CD4-positive, alpha-beta T cell (primary cell): ENCODE measurements at regions of chr6 and their contacts with region 1.

Region 1: DNA sequence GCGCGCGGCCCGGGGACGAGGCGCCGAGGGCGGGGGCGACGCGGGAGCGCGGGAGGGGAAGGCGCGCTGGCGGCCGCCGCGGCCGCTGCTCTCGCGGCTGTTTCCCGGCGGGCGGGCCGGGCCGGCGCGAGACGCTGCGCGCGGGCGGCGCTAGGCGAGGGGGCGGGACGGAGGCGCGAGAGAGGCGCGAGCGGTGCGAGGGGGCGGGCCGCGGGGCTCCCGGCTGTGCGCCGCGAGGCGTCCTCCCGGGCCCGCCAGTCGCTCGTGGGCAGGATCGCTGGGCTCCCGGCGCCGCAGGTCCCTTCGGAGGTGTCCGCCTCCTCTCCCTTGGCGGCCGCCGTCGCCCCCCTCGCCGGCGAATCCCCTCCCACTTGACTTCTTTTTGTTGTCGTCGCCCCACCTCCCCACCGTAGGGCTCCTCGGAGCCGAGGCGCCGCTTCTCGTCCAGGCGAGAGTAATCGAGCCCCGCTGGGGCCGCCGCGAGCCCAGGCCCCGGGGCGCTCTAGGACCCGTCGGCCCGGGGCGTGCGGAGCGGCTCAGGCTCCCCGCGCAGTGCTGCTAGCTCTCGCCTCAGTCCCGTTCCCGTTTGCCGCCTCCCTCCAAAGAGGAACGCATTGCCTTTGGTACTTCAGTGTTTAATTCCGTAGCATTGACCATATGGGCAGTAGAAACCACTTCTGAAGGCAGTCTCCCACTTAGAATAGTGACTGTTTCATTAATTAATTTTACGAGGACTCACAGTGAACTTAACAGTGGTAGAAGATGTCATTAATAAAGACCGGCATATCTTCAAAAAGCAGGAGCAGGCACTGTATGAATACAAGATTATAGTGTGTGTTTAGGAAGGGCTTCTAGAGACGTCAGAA is at the start of gene RANBP9:
- DNase-seq: peak; percentile 76 to 95 (median 85)
- ATAC-seq: peak; percentile 81
- H3K4me3 ChIP-seq: peak within 1 kb of the TSS; percentile 80
- H3K4me3 Mint-ChIP-seq: peak within 1 kb of the TSS; percentile 96
- H3K27ac ChIP-seq: peak within 1 kb of the TSS; percentile 78 to 81
- H3K27ac Mint-ChIP-seq: peak within 1 kb of the TSS; percentile 98
- H3K4me1 ChIP-seq: peaks cover 26% of the 10 kb centered on the region
- H3K4me1 Mint-ChIP-seq: peaks cover 52% of the 10 kb centered on the region
- H3K27me3 ChIP-seq: no peaks in the 10 kb centered on the region
- H3K27me3 Mint-ChIP-seq: no peaks in the 10 kb centered on the region
- CTCF ChIP-seq: no peak
- total RNA-seq, gene RANBP9: 60.8 to 62.9 TPM

Region 2: GRCh38 chr6:13574149-13574570 is 137.8 kb before region 1 on chr6:
- CTCF ChIA-PET with region 1: interaction called, 25 read pairs
- POLR2A ChIA-PET with region 1: interaction called, 42 read pairs
- intact Hi-C with region 1: loop called (anchors 1 kb)
- DNase-seq: peak; percentile 85 to 98 (median 91)
- ATAC-seq: peak; percentile 79
- H3K4me3 ChIP-seq: peak overlapping the region; percentile 97
- H3K4me3 Mint-ChIP-seq: peak overlapping the region; percentile 98
- H3K27ac ChIP-seq: peak overlapping the region; percentile 82 to 86
- H3K27ac Mint-ChIP-seq: peak overlapping the region; percentile 99
- H3K4me1 ChIP-seq: peaks cover 14% of the 10 kb centered on the region
- H3K4me1 Mint-ChIP-seq: peaks cover 34% of the 10 kb centered on the region
- H3K27me3 ChIP-seq: no peaks in the 10 kb centered on the region
- H3K27me3 Mint-ChIP-seq: no peaks in the 10 kb centered on the region
- CTCF ChIP-seq: peak; percentile 72

Region 3: DNA sequence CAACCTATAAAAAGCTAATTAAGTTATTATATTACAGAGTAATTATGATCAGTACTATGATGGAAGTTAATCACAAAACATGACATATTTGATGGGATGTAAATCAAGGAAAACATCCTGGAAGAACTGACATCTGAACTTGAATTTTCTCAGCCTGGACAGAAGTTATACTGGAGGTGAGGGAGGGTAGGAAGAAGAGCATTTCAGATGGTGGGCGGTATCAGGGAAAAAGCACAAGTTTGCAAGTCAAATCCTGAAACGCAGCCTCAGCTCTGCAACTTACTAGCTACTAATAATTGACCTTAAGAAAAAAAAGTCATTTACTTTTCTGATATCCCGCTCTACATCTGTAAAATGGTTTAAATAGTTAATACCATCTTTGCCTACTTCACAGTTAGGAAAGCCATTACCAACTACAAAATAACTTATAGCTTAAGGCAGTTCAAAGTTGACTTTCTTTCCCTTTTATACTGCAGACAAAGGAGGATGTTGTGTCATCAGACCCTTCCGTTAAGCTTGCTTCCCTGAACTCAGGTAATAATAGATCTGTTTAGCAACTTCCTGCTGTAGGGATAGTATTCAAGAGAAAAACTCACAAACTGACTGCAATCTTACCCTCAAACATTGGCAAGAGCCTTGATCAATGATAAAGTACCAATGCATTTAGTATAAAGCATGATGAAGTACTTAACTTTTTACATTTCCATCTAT is 75.9 kb before region 1 on chr6:
- CTCF ChIA-PET with region 1: interaction called, 5 read pairs
- POLR2A ChIA-PET with region 1: interaction called, 14 read pairs
- intact Hi-C with region 1: loop called in 1 of 2 experiments (anchors 5 kb)
- DNase-seq: peak in 2 of 14 experiments; percentile 13 to 34
- ATAC-seq: peak; percentile 71
- H3K4me3 ChIP-seq: no peak overlapping the region
- H3K4me3 Mint-ChIP-seq: no peak overlapping the region
- H3K27ac ChIP-seq: peak overlapping the region in 1 of 2 donors; percentile 24
- H3K27ac Mint-ChIP-seq: peak overlapping the region; percentile 72
- H3K4me1 ChIP-seq: peaks cover 3% of the 10 kb centered on the region
- H3K4me1 Mint-ChIP-seq: peaks cover 44% of the 10 kb centered on the region
- H3K27me3 ChIP-seq: no peaks in the 10 kb centered on the region
- H3K27me3 Mint-ChIP-seq: no peaks in the 10 kb centered on the region
- CTCF ChIP-seq: no peak

Region 4: DNA sequence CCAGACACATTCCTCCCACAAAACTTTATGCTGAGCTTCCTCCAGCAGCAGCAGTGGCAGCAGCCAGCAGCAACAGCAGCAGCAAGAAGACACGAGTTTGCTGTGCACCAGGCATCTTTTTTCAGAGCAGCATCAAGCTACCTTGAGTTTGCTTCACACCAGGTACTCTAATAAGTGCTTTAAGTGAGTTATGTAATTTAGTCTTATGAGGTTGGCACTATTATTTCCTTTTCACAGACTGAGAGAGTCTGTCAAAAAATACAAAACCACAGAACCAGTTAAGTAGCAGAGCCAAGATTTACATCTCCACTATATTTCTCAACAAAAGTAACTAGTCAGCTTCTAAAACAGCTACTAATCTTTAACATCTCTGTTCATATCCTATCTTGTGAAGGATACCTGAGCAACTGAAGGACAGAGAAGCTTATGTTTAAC is 24.0 kb before region 1 on chr6:
- CTCF ChIA-PET with region 1: no interaction called
- POLR2A ChIA-PET with region 1: interaction called, 45 read pairs
- intact Hi-C with region 1: loop called (anchors 2 kb)
- DNase-seq: peak in 10 of 14 experiments; percentile 7 to 69 (median 28)
- ATAC-seq: peak; percentile 83
- H3K4me3 ChIP-seq: no peak overlapping the region
- H3K4me3 Mint-ChIP-seq: peak overlapping the region; percentile 79
- H3K27ac ChIP-seq: peak overlapping the region; percentile 64 to 83
- H3K27ac Mint-ChIP-seq: peak overlapping the region; percentile 87
- H3K4me1 ChIP-seq: peaks cover 43% of the 10 kb centered on the region
- H3K4me1 Mint-ChIP-seq: peaks cover 64% of the 10 kb centered on the region
- H3K27me3 ChIP-seq: no peaks in the 10 kb centered on the region
- H3K27me3 Mint-ChIP-seq: no peaks in the 10 kb centered on the region
- CTCF ChIP-seq: no peak

Region 5: DNA sequence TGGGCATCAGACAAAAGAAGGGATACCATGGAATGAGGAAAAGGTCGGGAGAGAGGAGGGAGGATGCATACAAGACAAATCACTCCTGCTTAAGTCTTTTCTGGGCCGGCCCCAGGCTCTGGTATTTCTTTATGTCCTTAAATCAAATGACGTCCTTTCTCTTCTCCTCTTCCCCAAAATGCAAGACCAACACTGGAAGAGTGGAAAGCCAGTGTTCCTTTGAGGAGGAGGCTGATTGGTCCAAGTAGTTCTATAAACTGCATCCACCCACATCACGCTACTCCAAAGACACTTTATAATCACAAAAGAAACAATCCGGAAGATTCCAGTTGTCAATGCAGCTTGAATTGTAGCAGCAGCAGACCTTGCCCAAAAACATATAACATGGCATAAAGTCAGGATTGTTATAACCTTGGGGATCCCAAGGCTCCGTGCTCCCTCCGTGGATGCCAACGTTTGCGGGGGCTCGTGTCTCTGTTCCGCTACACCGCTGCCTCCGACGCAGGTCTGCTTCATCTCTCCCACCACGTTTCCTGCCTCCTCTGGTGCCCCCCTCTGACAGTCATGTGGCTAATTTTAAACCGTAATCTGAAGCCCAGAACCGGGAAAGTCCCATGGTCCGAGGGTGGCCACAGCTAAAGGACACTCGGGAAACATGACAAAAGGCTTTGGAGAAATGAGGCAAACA is 55.3 kb after region 1 on chr6:
- CTCF ChIA-PET with region 1: interaction called, 5 read pairs
- POLR2A ChIA-PET with region 1: interaction called, 5 read pairs
- intact Hi-C with region 1: loop called (anchors 2 to 5 kb)
- DNase-seq: peak; percentile 12 to 67 (median 38)
- ATAC-seq: peak; percentile 51
- H3K4me3 ChIP-seq: peak overlapping the region; percentile 24
- H3K4me3 Mint-ChIP-seq: peak overlapping the region; percentile 44
- H3K27ac ChIP-seq: no peak overlapping the region
- H3K27ac Mint-ChIP-seq: no peak overlapping the region
- H3K4me1 ChIP-seq: peaks cover 26% of the 10 kb centered on the region
- H3K4me1 Mint-ChIP-seq: peaks cover 38% of the 10 kb centered on the region
- H3K27me3 ChIP-seq: no peaks in the 10 kb centered on the region
- H3K27me3 Mint-ChIP-seq: no peaks in the 10 kb centered on the region
- CTCF ChIP-seq: peak; percentile 55

Region 6: GRCh38 chr6:14117158-14118090 is 405.5 kb after region 1 on chr6 and contains the start of gene CD83:
- CTCF ChIA-PET with region 1: no interaction called
- POLR2A ChIA-PET with region 1: no interaction called
- intact Hi-C with region 1: loop called in 1 of 2 experiments (anchors 5 kb)
- DNase-seq: peak; percentile 65 to 97 (median 82)
- ATAC-seq: peak; percentile 96
- H3K4me3 ChIP-seq: peak within 1 kb of the TSS; percentile 98
- H3K4me3 Mint-ChIP-seq: peak within 1 kb of the TSS; percentile 96
- H3K27ac ChIP-seq: peak within 1 kb of the TSS; percentile 64 to 76
- H3K27ac Mint-ChIP-seq: peak within 1 kb of the TSS; percentile 94
- H3K4me1 ChIP-seq: peaks cover 19% of the 10 kb centered on the region
- H3K4me1 Mint-ChIP-seq: peaks cover 48% of the 10 kb centered on the region
- H3K27me3 ChIP-seq: no peaks in the 10 kb centered on the region
- H3K27me3 Mint-ChIP-seq: no peaks in the 10 kb centered on the region
- CTCF ChIP-seq: no peak
- total RNA-seq, gene CD83: 35.3 to 36.4 TPM